Activated T-helper 2 cell treated with anti-CD3 and anti-CD28 coated beads, Interferon-gamma antibody, Interleukin-2, Interleukin-4, amounts not matched to agents 10 μg/mL and 5 μg/mL and 100 μg/mL, durations not matched to agents 14 hours and 24 hours and 36 hours (primary cell): ENCODE measurements at regions of chr2 and their contacts with region 1.

Region 1: DNA sequence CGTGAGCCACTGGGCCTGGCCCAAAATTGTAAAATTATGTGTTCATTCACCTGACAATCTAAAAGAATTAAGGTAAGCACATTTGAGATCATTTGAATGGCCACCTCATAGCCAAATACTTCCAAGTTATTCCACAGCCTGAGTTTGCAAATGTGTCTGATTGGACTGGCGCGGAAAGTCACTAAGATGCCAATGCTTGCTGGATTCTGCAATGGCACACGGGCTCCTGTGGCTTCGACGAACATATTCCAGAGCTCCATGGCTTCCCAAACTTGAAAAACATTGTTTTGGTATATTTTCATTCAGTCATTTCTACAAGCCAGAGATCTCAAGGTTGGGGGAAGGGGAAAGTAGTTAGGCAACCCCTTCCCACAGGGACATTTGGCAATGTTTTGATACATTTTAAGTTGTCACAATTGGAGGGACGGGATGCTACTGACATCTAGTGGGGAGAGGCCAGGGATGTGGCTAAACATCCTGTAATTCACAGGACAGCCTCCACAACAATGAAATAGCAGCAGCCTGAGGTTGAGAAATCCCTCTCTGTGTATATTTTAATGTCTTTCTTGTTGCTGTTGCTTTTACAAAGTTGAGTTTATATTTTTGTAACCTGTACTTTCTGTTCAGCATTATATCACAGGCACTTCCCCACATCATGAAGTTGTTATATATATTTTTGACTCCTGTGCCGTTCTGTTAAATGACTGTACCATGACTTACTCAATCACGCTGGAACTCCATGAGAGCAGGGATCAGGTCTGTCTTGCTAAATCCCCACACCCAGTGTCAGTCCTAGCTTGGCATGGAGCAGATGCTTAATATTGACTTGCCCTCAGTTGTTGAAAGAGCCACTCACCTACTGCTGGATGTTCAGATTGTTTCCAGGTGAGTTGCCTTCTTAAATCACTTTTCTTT is 56.9 kb downstream of the COL4A4 start:
- DNase-seq: no peak
- H3K4me3 Mint-ChIP-seq: no peak overlapping the region
- H3K27ac Mint-ChIP-seq: no peak overlapping the region
- H3K4me1 Mint-ChIP-seq: no peaks in the 10 kb centered on the region
- H3K27me3 Mint-ChIP-seq: no peaks in the 10 kb centered on the region

Region 2: GRCh38 chr2:225668606-225669266 is 1438.4 kb before region 1 on chr2:
- intact Hi-C with region 1: loop called (anchors 5 kb)
- DNase-seq: no peak
- H3K4me3 Mint-ChIP-seq: no peak overlapping the region
- H3K27ac Mint-ChIP-seq: no peak overlapping the region
- H3K4me1 Mint-ChIP-seq: no peaks in the 10 kb centered on the region
- H3K27me3 Mint-ChIP-seq: peaks cover 5% of the 10 kb centered on the region

Region 3: DNA sequence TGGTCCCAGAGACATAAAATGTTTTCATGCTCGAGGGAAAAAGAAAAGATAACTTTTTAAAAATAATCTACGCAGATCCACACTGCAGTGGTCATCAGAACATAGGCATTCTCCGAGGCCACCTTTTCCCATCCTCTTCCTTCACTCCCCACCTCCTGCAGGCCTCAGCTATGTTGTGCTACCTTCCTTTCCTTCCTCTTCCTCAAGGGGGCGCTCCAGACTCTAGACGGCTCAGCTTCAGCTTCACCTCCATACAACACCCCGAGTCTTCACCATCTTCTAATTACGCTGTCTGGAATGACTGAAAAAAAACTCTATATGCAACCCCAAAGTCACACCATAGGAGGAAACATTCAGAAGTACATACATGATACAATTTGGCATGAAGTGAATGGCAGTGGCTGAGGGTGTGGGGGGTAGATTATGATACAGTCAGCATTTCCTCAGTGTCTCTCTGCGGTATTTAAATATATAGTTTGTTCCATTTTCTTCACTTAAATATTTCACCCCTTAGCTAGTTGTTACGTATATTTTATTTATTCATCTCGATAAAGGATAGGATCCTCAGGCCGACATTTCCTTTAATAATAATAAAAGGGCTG is 891.1 kb before region 1 on chr2:
- intact Hi-C with region 1: loop called (anchors 5 kb)
- DNase-seq: peak; percentile 26
- H3K4me3 Mint-ChIP-seq: no peak overlapping the region
- H3K27ac Mint-ChIP-seq: no peak overlapping the region
- H3K4me1 Mint-ChIP-seq: no peaks in the 10 kb centered on the region
- H3K27me3 Mint-ChIP-seq: peaks cover 2% of the 10 kb centered on the region

Region 4: GRCh38 chr2:227163998-227164762 is 57.1 kb after region 1 on chr2 and contains the starts of genes COL4A3 and COL4A4:
- intact Hi-C with region 1: no loop called
- DNase-seq: no peak
- H3K4me3 Mint-ChIP-seq: peak within 1 kb of the TSS; percentile 64
- H3K27ac Mint-ChIP-seq: no peak within 1 kb of the TSS
- H3K4me1 Mint-ChIP-seq: peaks cover 6% of the 10 kb centered on the region
- H3K27me3 Mint-ChIP-seq: peaks cover 44% of the 10 kb centered on the region
- total RNA-seq, gene COL4A3: not detected in 2 replicates
- total RNA-seq, gene COL4A4: not detected in 2 replicates